Panc1 (cell line): ENCODE measurements at regions of chr16 and their contacts with region 1.

Region 1: GRCh38 chr16:67176662-67177061 is 6.3 kb downstream of the NOL3 start:
- DNase-seq: no peak
- ATAC-seq: no peak
- H3K4me3 ChIP-seq: no peak overlapping the region
- H3K27ac ChIP-seq: no peak overlapping the region
- H3K4me1 ChIP-seq: 0 out of 2 replicates have a peak, but pooled peaks cover 4% of the 10 kb centered on the region
- H3K27me3 ChIP-seq: no peaks in the 10 kb centered on the region
- CTCF ChIP-seq: no peak

Region 2: GRCh38 chr16:67234180-67234597 is 57.5 kb after region 1 on chr16:
- CTCF ChIA-PET with region 1: no interaction called
- POLR2A ChIA-PET with region 1: interaction called, 14 read pairs
- in situ Hi-C with region 1: no loop called
- intact Hi-C with region 1: no loop called
- DNase-seq: no peak
- ATAC-seq: no peak
- H3K4me3 ChIP-seq: no peak overlapping the region
- H3K27ac ChIP-seq: no peak overlapping the region
- H3K4me1 ChIP-seq: no peaks in the 10 kb centered on the region
- H3K27me3 ChIP-seq: no peaks in the 10 kb centered on the region
- CTCF ChIP-seq: no peak

Region 3: DNA sequence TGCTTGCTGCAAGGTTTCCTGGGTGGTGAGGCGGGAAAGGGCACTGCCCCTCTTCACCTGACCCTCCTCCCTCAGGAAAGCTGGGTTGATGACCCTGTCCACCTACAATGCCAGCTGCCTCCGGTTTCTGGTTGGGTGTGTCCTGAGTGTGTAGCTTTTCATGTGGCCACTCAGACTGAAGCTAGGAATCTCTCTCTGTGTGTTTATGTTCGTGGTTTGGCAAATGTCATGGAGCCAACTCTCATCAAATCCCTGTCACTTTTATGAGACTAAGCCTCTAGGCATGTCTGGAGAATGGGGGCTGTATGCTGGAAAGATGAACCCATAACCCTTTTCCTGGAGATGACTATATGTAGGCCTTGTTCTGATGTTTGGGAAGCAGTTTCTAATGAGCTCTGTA is 119.8 kb after region 1 on chr16:
- CTCF ChIA-PET with region 1: no interaction called
- POLR2A ChIA-PET with region 1: no interaction called
- in situ Hi-C with region 1: no loop called
- intact Hi-C with region 1: no loop called
- DNase-seq: no peak
- ATAC-seq: no peak
- H3K4me3 ChIP-seq: no peak overlapping the region
- H3K27ac ChIP-seq: no peak overlapping the region
- H3K4me1 ChIP-seq: no peaks in the 10 kb centered on the region
- H3K27me3 ChIP-seq: no peaks in the 10 kb centered on the region
- CTCF ChIP-seq: no peak

Region 4: GRCh38 chr16:67935402-67936123 is 758.9 kb after region 1 on chr16:
- CTCF ChIA-PET with region 1: no interaction called
- POLR2A ChIA-PET with region 1: no interaction called
- in situ Hi-C with region 1: no loop called
- intact Hi-C with region 1: no loop called
- DNase-seq: peak; percentile 73
- ATAC-seq: peak; percentile 96
- H3K4me3 ChIP-seq: peak overlapping the region; percentile 80 to 92
- H3K27ac ChIP-seq: peak overlapping the region; percentile 93
- H3K4me1 ChIP-seq: 0 out of 2 replicates have a peak, but pooled peaks cover 4% of the 10 kb centered on the region
- H3K27me3 ChIP-seq: no peaks in the 10 kb centered on the region
- CTCF ChIP-seq: no peak